Adrenal gland (tissue), 19 donors: ENCODE measurements at regions of chr2 and their contacts with region 1.

Region 1: GRCh38 chr2:232781765-232782164 is 5.4 kb upstream of the KCNJ13 start:
- DNase-seq: peak in 4 of 7 donors; percentile 33 to 49 (median 48)
- H3K4me3 ChIP-seq: no peak overlapping the region
- H3K27ac ChIP-seq: no peak overlapping the region
- H3K4me1 ChIP-seq: peaks cover 0 to 3% of the 10 kb centered on the region in 2 donors
- H3K27me3 ChIP-seq: no peaks in the 10 kb centered on the region
- CTCF ChIP-seq: no peak
- POLR2A ChIP-seq: no peak

Region 2: DNA sequence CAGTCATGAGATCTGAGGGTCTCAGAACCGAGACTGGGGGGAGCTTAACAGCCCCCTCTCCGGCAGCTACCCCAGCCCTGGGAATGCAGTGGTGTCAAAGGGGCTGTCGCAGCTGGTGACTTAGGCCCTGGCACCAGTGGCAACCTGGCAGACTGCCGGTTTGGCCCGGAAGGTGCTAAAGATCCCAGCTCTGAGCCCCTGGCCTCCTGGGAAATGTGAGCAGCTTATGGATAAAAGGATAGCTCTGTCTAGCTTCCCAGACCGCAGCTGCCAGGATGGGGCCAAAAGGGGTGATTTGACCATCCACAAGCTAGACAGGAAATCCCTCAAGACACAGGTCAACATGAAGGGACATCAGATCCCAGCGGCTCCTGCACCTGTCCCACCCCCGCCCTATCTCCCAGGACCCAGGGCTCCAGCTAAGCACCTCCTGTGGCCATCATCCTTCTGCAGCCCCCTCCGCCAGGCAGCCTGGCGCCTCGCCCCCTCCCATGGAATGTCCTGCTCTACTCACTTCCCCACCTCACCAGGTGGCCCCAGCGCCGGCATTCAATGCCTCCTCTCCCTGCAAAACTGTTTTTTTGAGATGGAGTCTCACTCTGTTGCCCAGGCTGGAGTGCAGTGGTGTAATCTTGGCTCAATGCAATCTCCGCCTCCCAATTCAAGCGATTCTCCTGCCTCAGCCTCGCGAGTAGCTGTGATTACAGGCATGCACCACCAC is 181.6 kb before region 1 on chr2:
- intact Hi-C with region 1: loop called in 1 of 2 experiments (anchors 10 kb)
- DNase-seq: no peak
- H3K4me3 ChIP-seq: no peak overlapping the region
- H3K27ac ChIP-seq: no peak overlapping the region
- H3K4me1 ChIP-seq: no peaks in the 10 kb centered on the region
- H3K27me3 ChIP-seq: no peaks in the 10 kb centered on the region
- CTCF ChIP-seq: no peak
- POLR2A ChIP-seq: no peak

Region 3: DNA sequence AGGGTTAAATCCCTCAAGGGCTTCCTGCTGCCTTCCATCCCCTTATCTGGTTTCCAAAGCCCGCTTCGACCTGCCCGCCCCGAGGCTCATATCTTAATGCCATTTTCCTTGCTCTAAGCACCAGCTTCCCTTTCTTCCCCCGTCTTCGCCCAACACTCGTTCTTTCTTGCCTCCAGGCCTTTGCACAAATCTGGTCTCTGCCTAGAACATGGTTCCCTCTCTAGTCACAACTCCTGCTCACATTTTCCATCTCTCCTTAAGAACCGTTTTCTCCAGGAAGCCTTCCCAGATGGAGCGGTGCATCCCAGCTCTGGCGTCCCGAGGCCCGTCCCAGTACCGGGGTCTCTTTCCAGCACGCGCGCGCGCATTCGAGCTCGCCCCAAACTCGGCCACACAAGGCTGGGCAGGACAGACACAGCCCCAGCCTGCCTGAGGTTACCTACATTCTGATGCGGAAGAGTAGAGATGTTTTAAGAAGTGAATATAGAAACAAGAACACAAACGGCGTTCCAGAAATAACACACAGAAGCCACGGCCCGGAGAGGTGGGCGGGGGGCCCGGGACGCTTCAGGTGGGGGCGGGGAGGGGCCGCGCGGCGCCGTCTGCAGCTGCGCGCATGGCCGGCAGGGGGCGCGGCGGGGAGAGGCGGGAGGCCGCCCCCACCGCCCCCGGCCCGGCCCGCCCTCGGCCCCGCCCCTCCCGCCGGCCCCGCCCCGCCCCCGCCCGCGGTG is 572.2 kb after region 1 on chr2 and contains the start of gene DGKD:
- intact Hi-C with region 1: no loop called
- DNase-seq: peak; percentile 36 to 68 (median 50)
- H3K4me3 ChIP-seq: peak within 1 kb of the TSS in 3 of 4 donors; percentile 14 to 85 (median 38)
- H3K27ac ChIP-seq: peak within 1 kb of the TSS in 2 of 5 donors; percentile 34 to 69
- H3K4me1 ChIP-seq: peaks cover 11 to 37% of the 10 kb centered on the region in 2 donors
- H3K27me3 ChIP-seq: no peaks in the 10 kb centered on the region
- CTCF ChIP-seq: peak in 4 of 6 experiments; percentile 11 to 25 (median 19)
- POLR2A ChIP-seq: no peak
- total RNA-seq, gene DGKD: 8.8 to 25.2 (median 16.2) TPM